Stomach (tissue), 19 donors: ENCODE measurements at regions of chr6 and their contacts with region 1.

Region 1: DNA sequence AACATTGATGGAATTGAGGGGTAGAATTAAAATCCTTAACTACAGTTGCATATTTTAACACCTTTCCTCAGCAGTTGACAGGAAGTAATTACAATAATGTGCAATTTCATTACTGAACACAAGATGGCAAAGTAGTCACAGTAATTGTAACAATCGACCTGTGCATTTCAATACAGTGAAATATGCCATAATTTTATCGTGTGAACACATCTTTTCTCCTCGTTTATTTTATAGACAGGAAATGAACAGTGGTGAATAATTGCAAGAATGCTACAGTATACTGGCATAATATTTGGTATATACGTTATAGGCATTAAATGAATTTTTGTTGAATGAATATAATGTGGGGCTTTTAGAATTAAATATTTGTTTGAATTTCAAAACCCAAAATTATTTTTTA is 25.0 kb downstream of the CYB5R4 start:
- DNase-seq: peak in 1 of 2 donors; percentile 78
- H3K4me3 ChIP-seq: no peak overlapping the region
- H3K27ac ChIP-seq: no peak overlapping the region
- H3K4me1 ChIP-seq: peaks cover 0 to 2% (median 0%) of the 10 kb centered on the region in 4 donors
- H3K27me3 ChIP-seq: no peaks in the 10 kb centered on the region
- CTCF ChIP-seq: peak in 5 of 7 experiments; percentile 38 to 76 (median 62)
- EP300 ChIP-seq: no peak
- POLR2A ChIP-seq: no peak

Region 2: GRCh38 chr6:84227434-84228197 is 343.1 kb after region 1 on chr6 and contains the start of gene CEP162:
- intact Hi-C with region 1: loop called (anchors 10 kb)
- DNase-seq: peak; percentile 92 to 97
- H3K4me3 ChIP-seq: peak within 1 kb of the TSS; percentile 64 to 88 (median 80)
- H3K27ac ChIP-seq: peak within 1 kb of the TSS; percentile 83 to 93 (median 87)
- H3K4me1 ChIP-seq: peaks cover 0 to 27% (median 19%) of the 10 kb centered on the region in 4 donors
- H3K27me3 ChIP-seq: peaks cover 0 to 3% (median 0%) of the 10 kb centered on the region in 3 donors
- CTCF ChIP-seq: peak in 5 of 7 experiments; percentile 29 to 68 (median 52)
- EP300 ChIP-seq: no peak
- POLR2A ChIP-seq: no peak
- total RNA-seq, gene CEP162: 1.4 to 33.9 (median 12.1) TPM